Heart left ventricle (tissue), 16 donors: ENCODE measurements at regions of chr14 and their contacts with region 1.

Region 1: DNA sequence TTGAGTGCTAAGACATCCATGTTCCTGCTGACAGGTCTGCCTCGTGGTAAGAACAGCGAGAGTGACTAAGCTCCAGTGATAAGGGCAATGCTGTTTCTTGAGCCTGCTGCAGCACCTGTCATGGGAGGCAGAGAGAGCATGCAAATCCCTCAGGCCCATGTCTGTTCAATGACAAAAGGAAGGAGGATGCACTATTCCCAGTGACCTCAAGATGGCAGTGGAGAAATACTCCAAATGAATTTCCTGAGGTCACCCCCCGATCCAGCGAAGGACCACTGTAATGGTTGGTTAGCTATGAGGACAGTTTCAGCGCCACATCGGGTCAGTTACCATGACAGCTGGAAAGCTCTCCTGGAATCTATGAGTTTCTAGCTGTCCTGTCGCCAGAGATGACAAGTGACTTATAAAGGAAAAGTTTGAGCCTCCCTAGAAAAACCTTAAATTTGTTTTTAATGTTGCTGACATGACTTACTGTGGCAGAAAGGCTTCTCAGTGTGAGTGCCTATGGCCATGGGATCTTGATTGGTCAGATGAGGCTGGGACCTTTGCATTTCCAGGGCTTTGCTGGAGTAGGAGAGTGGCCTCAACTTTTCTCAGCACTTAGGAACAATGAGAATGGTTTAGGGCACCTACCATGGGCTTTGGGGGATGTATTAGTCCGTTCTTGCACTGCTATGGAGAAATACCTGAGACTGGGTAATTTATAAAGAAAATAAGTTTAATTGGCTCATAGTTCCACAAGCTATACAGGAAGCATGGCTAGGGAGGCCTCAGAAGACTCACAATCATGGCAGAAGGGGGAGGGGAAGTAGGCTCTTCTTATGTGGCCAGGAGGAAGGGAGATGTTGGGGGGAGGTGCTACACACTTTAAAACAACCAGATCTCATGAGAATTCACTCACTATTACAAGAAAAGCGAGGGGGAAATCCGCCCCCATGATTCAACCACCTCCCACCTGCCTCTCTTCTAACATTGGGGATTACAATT is 88.0 kb upstream of the TMEM260 start:
- DNase-seq: peak in 1 of 5 donors; percentile 10
- ATAC-seq: peak in 3 of 4 donors; percentile 32 to 64 (median 35)
- H3K4me3 ChIP-seq: no peak overlapping the region
- H3K27ac ChIP-seq: no peak overlapping the region
- H3K4me1 ChIP-seq: peaks cover 0 to 11% (median 1%) of the 10 kb centered on the region in 12 donors
- H3K27me3 ChIP-seq: no peaks in the 10 kb centered on the region
- CTCF ChIP-seq: peak; percentile 51 to 74 (median 62)
- POLR2A ChIP-seq: no peak

Region 2: DNA sequence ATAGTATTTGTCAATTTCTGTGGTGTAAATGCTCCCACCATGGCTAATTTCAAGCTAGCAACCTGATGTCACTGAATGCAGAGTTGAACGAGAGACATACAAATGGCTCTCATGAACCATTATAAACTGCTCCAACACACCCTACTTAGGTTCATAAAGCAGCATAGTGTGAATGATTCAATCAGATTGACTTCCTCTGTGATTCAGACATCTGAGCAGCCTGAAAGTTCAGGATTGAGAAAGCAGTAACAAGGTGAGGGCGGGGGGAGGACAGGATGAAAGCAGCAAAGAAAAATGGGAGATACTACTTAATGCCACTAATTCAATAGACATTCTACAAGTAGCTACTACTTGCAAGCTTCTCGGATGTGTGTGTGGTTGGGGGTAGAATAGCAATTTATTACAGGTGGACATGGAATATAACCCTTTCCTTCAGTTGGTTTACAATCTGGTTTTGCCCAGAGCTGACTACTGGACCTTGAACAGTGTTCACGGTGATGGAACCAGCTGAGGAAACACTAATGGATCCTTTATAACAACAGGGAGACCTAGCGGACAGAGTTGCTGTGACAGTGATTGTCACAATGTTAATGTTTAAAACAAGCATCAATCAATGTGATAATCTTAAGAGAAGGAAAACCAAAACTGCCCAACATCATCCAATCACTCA is 425.8 kb before region 1 on chr14:
- intact Hi-C with region 1: no loop called
- DNase-seq: no peak
- ATAC-seq: no peak
- H3K4me3 ChIP-seq: no peak overlapping the region
- H3K27ac ChIP-seq: no peak overlapping the region
- H3K4me1 ChIP-seq: no peaks in the 10 kb centered on the region
- H3K27me3 ChIP-seq: peaks cover 0 to 3% (median 0%) of the 10 kb centered on the region in 9 donors
- CTCF ChIP-seq: no peak
- POLR2A ChIP-seq: no peak

Region 3: DNA sequence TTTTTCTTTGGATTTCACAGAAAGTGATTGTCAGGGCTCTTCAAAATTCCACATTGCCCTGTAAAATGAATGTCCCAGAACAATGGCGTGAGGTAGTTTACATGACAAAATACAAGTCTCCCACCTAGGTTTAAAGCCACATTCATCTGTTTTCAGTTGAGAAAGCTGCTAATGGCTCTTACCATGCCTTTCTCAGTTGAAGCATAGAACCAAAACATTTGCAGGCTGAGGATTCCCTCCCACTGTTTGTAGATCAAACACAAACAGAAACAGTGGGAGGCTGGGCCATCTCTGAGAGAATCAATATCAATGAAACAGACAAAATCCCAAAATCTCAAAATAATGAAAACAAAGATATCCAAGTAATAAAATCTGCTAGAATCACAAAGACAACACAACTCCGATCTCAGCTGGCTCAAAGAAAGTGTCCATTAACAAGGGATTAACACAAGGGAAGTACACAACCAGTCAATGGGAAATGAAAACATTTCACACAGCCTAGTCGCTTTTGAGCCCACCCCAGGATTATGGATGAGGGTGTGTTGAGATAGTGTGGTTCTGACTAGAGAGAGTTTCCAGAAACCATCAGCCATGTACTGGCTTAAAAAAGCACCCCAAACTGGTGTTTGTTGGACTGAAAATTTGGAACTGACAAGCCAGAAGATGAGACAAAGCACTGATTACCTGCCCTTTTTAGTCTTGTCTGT is 33.5 kb after region 1 on chr14:
- intact Hi-C with region 1: no loop called
- DNase-seq: no peak
- ATAC-seq: no peak
- H3K4me3 ChIP-seq: no peak overlapping the region
- H3K27ac ChIP-seq: no peak overlapping the region
- H3K4me1 ChIP-seq: no peaks in the 10 kb centered on the region
- H3K27me3 ChIP-seq: peaks cover 0 to 47% (median 6%) of the 10 kb centered on the region in 9 donors
- CTCF ChIP-seq: no peak
- POLR2A ChIP-seq: no peak

Region 4: DNA sequence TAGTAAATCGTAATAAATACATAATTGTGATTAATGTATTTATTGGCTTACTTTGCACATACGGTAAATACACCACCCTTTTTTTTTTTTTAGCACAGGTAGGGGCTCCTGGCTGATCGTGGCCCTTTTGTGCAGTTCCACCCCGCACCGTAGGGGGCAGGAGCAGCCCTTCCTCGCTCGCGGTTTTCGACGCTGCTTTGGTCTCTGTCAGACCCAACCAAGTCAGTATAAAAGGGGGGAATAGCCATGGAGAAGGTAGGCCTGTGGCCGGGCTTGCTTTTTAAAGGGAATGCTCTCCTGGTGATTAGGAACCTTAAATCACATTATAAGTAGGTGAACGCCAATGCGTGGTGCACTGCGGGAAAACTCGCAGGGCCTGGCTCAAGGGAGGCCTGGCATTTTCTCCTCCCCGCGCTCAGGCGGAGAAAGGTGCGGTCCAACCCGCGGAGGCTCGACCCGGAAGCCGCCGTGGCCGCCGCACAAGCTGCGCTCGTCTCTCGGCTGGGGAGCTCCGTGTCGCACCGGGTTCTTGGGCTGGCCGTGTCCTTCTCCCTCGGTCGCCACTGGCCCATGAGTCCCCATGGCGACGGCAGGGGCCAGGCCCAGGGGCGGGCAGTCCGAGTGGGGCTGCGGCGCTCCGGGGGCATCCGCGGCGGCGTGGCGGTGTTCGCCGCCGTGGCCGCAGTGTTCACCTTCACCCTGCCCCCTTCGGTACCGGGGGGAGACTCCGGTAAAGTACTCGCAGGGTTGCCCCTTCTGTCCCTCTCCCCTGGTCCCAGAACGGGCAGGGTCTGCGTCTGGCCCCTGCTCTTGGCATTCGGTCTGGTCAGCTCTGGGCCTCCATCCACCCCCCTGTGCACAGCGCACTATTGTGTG is 88.0 kb after region 1 on chr14 and contains the start of gene TMEM260:
- intact Hi-C with region 1: loop called in 1 of 10 experiments (anchors 5 kb)
- DNase-seq: peak; percentile 82 to 92 (median 85)
- ATAC-seq: peak; percentile 94 to 98 (median 98)
- H3K4me3 ChIP-seq: peak within 1 kb of the TSS; percentile 73 to 100 (median 99)
- H3K27ac ChIP-seq: peak within 1 kb of the TSS; percentile 51 to 94 (median 84)
- H3K4me1 ChIP-seq: peaks cover 0 to 30% (median 22%) of the 10 kb centered on the region in 12 donors
- H3K27me3 ChIP-seq: no peaks in the 10 kb centered on the region
- CTCF ChIP-seq: peak; percentile 82 to 98 (median 94)
- POLR2A ChIP-seq: peak in 1 of 2 donors; percentile 61
- total RNA-seq, gene TMEM260: 4.8 to 12.8 (median 5.8) TPM

Region 5: DNA sequence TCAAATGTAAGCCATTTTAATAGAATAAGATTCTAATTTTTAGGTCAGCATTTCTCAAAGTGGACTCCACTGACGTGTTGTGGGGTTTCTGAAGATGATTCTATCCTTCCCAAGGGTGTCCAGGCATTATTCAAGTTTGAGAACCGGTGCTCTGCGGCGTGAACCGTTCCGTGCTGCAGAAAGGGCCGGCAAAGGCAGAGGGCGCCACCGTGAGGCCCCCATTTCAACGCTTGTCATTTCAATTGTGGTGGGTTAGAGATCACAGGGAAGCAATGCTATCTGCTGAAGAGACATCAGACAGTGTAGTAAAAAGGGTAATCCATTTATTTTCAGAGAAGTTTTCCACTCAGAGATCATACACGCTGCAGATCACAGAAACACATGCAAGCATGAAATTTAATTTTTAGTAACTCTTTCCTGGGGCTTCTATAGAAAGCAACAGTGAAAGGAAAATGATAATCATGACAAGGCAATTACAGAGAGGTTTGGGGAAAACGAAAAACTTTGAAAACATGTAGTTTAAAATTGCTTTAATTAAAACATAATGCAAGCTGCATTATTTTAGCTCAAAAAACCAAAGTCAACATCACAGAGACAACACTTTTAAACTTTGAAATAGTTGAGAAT is 575.4 kb after region 1 on chr14:
- intact Hi-C with region 1: loop called in 1 of 10 experiments (anchors 5 kb)
- DNase-seq: peak in 1 of 5 donors; percentile 25
- ATAC-seq: no peak
- H3K4me3 ChIP-seq: no peak overlapping the region
- H3K27ac ChIP-seq: no peak overlapping the region
- H3K4me1 ChIP-seq: no peaks in the 10 kb centered on the region
- H3K27me3 ChIP-seq: peaks cover 0 to 41% (median 21%) of the 10 kb centered on the region in 9 donors
- CTCF ChIP-seq: peak; percentile 12 to 50 (median 36)
- POLR2A ChIP-seq: no peak

Region 6: DNA sequence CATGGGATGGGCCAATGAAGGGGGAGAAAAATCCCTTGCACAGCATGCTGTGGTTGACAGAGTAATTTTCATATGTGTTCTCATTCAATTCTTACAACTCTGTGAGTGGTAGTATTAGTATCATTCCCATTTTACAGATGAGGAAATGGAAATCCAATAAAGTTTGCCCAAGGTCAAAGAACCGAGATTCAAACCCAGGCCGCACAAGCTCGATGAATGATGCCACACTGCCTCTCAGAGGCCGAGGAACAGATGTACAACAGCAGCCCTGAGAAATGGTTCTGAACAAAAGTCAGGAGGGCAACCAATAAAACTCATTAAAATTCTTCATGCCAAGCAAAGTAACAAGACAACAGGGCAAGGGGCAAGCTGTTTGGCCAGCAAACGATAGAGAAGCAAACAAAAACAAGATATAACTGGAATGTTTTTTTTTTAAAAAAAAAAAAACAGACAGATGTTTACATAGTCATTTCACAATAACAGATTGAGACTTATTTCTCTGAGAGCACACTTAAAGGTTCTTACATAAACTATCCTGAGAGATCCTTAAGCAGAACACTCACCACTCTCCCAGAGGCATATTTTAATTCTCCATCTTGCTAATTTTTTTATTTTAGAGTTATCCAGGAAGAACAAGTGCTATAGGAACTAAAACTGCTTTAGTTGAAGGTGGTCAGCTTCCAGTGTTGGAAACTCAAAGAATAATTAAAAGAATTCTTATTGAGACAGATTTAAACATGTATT is 691.3 kb after region 1 on chr14:
- intact Hi-C with region 1: loop called in 2 of 10 experiments (anchors 2 to 10 kb)
- DNase-seq: no peak
- ATAC-seq: no peak
- H3K4me3 ChIP-seq: no peak overlapping the region
- H3K27ac ChIP-seq: no peak overlapping the region
- H3K4me1 ChIP-seq: no peaks in the 10 kb centered on the region
- H3K27me3 ChIP-seq: peaks cover 0 to 15% (median 4%) of the 10 kb centered on the region in 9 donors
- CTCF ChIP-seq: no peak
- POLR2A ChIP-seq: no peak

Region 7: DNA sequence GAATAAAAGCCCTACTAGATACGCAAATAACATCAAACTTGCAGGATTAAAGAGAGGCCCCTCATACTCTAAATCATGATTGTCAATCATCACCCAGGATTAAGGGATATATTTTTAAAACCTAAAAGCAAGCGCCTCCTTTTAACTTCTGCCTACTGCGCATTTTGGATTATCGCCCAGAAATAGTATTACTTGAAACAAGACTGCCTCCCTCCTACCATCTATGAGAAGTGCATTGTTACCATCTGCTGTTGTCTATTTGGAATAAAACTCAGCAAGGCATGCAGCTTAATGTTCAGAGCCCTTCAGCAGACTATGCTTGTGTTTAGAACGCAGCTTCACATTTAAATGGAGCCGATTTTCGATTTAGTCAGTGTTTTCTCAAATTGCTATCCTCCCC is 697.5 kb after region 1 on chr14:
- intact Hi-C with region 1: loop called in 3 of 10 experiments (anchors 2 to 10 kb)
- DNase-seq: no peak
- ATAC-seq: no peak
- H3K4me3 ChIP-seq: no peak overlapping the region
- H3K27ac ChIP-seq: no peak overlapping the region
- H3K4me1 ChIP-seq: no peaks in the 10 kb centered on the region
- H3K27me3 ChIP-seq: peaks cover 0 to 8% (median 0%) of the 10 kb centered on the region in 9 donors
- CTCF ChIP-seq: peak in 2 of 12 donors; percentile 13
- POLR2A ChIP-seq: no peak

Region 8: DNA sequence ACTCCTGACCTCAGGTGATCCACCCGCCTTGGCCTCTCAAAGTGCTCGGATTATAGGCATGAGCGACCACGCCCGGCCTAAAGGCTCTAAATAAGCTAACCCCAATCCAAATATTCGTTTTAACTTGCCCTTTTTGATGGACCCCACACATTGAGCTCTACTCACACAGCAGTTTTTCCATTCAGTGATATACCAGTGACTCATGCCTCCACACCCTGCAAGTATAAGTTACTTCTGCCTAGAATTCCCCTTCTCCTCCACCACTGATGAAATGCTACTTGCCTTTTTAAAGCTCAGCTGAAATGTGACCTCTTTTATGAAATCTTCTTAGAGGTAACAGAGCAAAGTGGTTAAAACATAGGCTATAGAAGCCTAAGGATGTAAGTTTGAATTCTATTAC is 708.3 kb after region 1 on chr14:
- intact Hi-C with region 1: loop called in 4 of 10 experiments (anchors 5 to 10 kb)
- DNase-seq: no peak
- ATAC-seq: no peak
- H3K4me3 ChIP-seq: no peak overlapping the region
- H3K27ac ChIP-seq: no peak overlapping the region
- H3K4me1 ChIP-seq: no peaks in the 10 kb centered on the region
- H3K27me3 ChIP-seq: peaks cover 0 to 5% (median 0%) of the 10 kb centered on the region in 9 donors
- CTCF ChIP-seq: no peak
- POLR2A ChIP-seq: no peak

Region 9: DNA sequence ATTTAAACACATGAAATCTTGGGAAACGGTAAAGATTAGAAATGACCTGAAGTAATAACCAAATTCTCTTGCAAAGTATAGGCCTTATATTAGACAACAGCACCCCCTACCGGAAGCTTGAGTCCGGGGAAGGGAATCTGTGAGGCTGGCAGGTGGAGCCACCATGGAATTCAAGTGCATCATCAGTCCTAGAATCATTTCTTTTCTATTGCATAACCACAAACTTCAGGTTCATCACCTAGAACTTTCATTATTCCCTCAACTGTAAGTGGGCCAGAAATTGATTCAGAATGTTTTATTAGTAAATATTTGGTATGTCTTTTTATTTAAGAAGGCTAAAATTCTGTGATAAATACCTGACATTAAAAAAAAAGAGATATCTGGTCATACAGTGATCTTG is 825.7 kb after region 1 on chr14:
- intact Hi-C with region 1: loop called (anchors 1 to 5 kb)
- DNase-seq: peak; percentile 45 to 59 (median 54)
- ATAC-seq: peak in 2 of 4 donors; percentile 60 to 62
- H3K4me3 ChIP-seq: no peak overlapping the region
- H3K27ac ChIP-seq: no peak overlapping the region
- H3K4me1 ChIP-seq: no peaks in the 10 kb centered on the region
- H3K27me3 ChIP-seq: peaks cover 0 to 19% (median 0%) of the 10 kb centered on the region in 9 donors
- CTCF ChIP-seq: peak; percentile 71 to 91 (median 84)
- POLR2A ChIP-seq: no peak